ENCODE measurements at regions of chr4 and their contacts with region 1.

Region 1: GRCh38 chr4:86895692-86896488 is 3.7 kb upstream of the C4orf36 start:
- DNase-seq: no peak
- H3K4me3 ChIP-seq: no peak overlapping the region
- H3K27ac ChIP-seq: no peak overlapping the region
- H3K4me1 ChIP-seq: no peaks in the 10 kb centered on the region
- H3K27me3 ChIP-seq: no peaks in the 10 kb centered on the region
- CTCF ChIP-seq: peak; percentile 58 to 78 (median 71)
- EP300 ChIP-seq: no peak
- POLR2A ChIP-seq: no peak

Region 2: GRCh38 chr4:86593688-86594558 is 302.0 kb before region 1 on chr4 and contains the start of gene PTPN13:
- intact Hi-C with region 1: loop called in 3 of 4 experiments (anchors 10 kb)
- DNase-seq: peak; percentile 99 to 100 (median 99)
- H3K4me3 ChIP-seq: peak within 1 kb of the TSS; percentile 85
- H3K27ac ChIP-seq: peak within 1 kb of the TSS; percentile 87 to 91
- H3K4me1 ChIP-seq: peaks cover 6% of the 10 kb centered on the region
- H3K27me3 ChIP-seq: no peaks in the 10 kb centered on the region
- CTCF ChIP-seq: no peak
- EP300 ChIP-seq: peak; percentile 37
- POLR2A ChIP-seq: peak; percentile 82
- total RNA-seq, gene PTPN13: 38.5 to 73.4 (median 54.6) TPM

Region 3: GRCh38 chr4:86816501-86817273 is 79.2 kb before region 1 on chr4:
- intact Hi-C with region 1: loop called in 1 of 4 experiments (anchors 5 kb)
- DNase-seq: peak; percentile 49 to 66 (median 56)
- H3K4me3 ChIP-seq: no peak overlapping the region
- H3K27ac ChIP-seq: peak overlapping the region; percentile 25 to 79
- H3K4me1 ChIP-seq: peaks cover 1% of the 10 kb centered on the region
- H3K27me3 ChIP-seq: no peaks in the 10 kb centered on the region
- CTCF ChIP-seq: no peak
- EP300 ChIP-seq: no peak
- POLR2A ChIP-seq: no peak

Region 4: DNA sequence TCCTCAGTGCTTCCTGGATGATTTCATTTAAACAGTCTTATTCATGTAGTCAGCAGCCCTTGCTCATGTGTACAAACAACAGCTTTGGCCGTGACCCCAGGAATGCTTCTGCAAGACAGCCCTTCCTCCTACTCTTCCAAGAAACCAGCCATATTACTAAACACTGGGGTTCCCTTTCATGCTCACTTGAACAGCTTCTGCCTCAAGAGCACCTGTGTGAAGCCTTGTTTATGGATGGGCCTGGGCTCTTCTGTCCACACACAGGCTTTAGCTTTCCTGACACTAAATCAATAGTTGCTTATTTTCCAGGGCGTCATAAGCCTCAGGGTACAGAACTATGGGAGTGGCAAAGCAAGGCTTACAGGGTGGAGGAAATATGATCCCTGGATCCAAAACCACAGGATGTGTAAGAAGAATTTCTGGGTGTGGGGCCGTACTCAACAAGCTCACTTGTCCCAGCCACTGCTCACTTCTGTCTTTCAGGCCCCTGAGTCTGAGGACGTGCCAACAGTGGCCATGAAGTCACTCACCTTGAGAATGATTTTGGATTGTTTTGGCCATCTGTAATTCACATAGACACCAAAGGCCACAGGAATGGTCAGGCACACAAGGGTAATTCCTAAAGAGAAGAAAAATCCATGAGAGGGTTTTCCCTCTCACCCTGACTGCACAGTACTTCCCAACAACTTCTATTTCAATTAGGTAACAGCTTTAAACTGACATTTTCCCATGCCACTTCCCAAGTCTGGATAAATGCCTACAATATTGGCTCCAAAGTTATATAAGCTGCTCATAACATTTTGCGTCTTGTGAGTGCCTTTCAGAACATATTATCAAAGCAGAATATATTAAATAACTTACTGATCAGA is 64.4 kb before region 1 on chr4:
- intact Hi-C with region 1: no loop called
- DNase-seq: peak; percentile 36 to 68 (median 64)
- H3K4me3 ChIP-seq: no peak overlapping the region
- H3K27ac ChIP-seq: peak overlapping the region in 1 of 2 donors; percentile 18
- H3K4me1 ChIP-seq: peaks cover 3% of the 10 kb centered on the region
- H3K27me3 ChIP-seq: no peaks in the 10 kb centered on the region
- CTCF ChIP-seq: no peak
- EP300 ChIP-seq: no peak
- POLR2A ChIP-seq: no peak

Region 5: GRCh38 chr4:87498446-87498900 is 602.6 kb after region 1 on chr4:
- intact Hi-C with region 1: no loop called
- DNase-seq: no peak
- H3K4me3 ChIP-seq: no peak overlapping the region
- H3K27ac ChIP-seq: no peak overlapping the region
- H3K4me1 ChIP-seq: peaks cover 7% of the 10 kb centered on the region
- H3K27me3 ChIP-seq: no peaks in the 10 kb centered on the region
- CTCF ChIP-seq: no peak
- EP300 ChIP-seq: no peak
- POLR2A ChIP-seq: no peak

Measured in ovary (tissue), 10 donors.